Activated B cell treated with CpG ODN at 0.5 μM for 24 hours (primary cell): ENCODE measurements at regions of chr1 and their contacts with region 1.

Region 1: DNA sequence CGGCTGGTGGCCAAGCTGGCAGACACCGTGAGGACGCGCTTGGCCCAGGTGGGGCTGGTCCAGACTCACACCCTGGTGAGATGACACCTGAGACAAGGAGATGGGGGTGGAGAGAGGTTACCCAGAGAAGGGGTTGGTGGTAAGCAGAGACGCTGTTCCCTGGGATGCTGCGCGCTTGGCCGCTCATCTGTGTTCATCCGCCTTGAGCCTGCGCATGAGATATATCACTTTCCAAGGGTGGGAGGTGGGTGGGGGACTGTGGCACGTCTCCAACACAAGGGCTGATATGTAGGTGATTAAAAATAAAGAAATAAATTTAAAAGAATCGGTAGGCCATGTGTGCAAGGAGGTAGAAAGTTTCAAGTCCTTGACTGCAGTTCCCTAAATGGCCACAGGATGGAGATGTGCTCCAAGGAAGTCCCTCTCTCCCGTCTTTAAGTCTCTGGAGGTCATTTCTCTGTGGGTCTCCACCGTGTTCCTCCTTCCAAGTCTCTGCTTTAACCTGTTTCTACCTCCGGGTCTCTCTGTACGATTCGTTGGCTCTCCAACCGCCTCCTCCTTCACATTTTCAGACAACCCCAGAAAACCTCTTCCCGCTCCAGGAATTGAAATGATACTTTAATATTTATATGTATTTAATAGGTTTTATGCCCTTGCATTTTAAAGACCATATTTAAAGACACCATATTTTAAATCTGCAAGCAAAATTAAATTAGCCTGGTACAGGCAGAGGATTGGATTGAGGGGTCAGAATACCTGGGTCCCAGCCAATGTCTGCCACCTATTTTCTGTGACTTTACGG is 4.5 kb downstream of the TTC24 start:
- DNase-seq: no peak
- ATAC-seq: peak; percentile 54
- H3K4me3 Mint-ChIP-seq: peak overlapping the region; percentile 53
- H3K27ac Mint-ChIP-seq: peak overlapping the region; percentile 99
- H3K4me1 Mint-ChIP-seq: peaks cover 33% of the 10 kb centered on the region
- H3K27me3 Mint-ChIP-seq: no peaks in the 10 kb centered on the region
- CTCF ChIP-seq: no peak

Region 2: DNA sequence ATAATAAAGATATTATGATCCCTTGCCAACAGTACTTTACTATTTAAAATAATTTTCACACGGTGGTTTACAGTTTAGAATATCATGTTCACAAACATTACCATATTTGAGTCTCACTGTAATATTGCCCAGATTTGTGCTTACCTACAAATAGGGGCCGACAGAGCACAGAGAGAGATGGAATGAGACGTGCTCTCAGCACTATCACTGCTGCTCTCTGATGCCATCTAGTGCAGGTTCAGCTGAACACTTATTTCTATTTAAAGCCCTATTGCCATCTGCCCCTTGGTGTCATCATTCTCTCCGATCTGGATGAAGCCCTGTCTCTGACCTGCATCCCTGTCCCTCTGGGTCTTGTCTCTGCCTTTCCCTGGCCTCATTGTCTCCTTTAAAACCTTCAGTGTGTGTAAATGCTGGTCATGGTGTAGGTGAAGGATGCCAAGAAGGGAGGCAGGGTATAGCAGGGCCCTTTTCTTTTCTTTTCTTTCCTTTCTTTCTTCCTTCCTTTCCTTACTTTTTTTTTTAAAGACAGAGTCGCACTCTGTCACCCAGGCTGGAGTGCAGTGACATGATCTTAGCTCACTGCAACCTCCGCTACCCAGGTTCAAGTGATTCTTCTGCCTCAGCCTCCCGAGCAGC is 24.1 kb after region 1 on chr1:
- CTCF ChIA-PET with region 1: interaction called, 18 read pairs
- POLR2A ChIA-PET with region 1: no interaction called
- intact Hi-C with region 1: loop called (anchors 1 kb)
- DNase-seq: no peak
- ATAC-seq: peak; percentile 78
- H3K4me3 Mint-ChIP-seq: peak overlapping the region; percentile 55
- H3K27ac Mint-ChIP-seq: peak overlapping the region; percentile 73
- H3K4me1 Mint-ChIP-seq: peaks cover 27% of the 10 kb centered on the region
- H3K27me3 Mint-ChIP-seq: peaks cover 5% of the 10 kb centered on the region
- CTCF ChIP-seq: peak; percentile 45